ENCODE measurements at regions of chr4 and their contacts with region 1.

Region 1: GRCh38 chr4:74932816-74933561 is at the start of gene PARM1:
- DNase-seq: peak; percentile 78 to 85
- ATAC-seq: peak; percentile 80 to 81
- H3K4me3 ChIP-seq: peak within 1 kb of the TSS; percentile 67 to 83 (median 78)
- H3K27ac ChIP-seq: peak within 1 kb of the TSS; percentile 71 to 83 (median 78)
- H3K4me1 ChIP-seq: no peaks in the 10 kb centered on the region
- H3K27me3 ChIP-seq: no peaks in the 10 kb centered on the region
- CTCF ChIP-seq: peak; percentile 81 to 86 (median 84)
- POLR2A ChIP-seq: peak; percentile 65 to 86
- total RNA-seq, gene PARM1: 9.3 to 13.1 (median 10.3) TPM

Region 2: GRCh38 chr4:74692972-74693371 is 240.0 kb before region 1 on chr4:
- in situ Hi-C with region 1: no loop called
- intact Hi-C with region 1: no loop called
- DNase-seq: no peak
- ATAC-seq: no peak
- H3K4me3 ChIP-seq: no peak overlapping the region
- H3K27ac ChIP-seq: no peak overlapping the region
- H3K4me1 ChIP-seq: no peaks in the 10 kb centered on the region
- H3K27me3 ChIP-seq: no peaks in the 10 kb centered on the region
- CTCF ChIP-seq: no peak
- POLR2A ChIP-seq: no peak

Region 3: GRCh38 chr4:74969507-74970474 is 36.8 kb after region 1 on chr4:
- in situ Hi-C with region 1: no loop called
- intact Hi-C with region 1: loop called (anchors 2 kb)
- DNase-seq: peak; percentile 69 to 82
- ATAC-seq: peak; percentile 92 to 93
- H3K4me3 ChIP-seq: peak overlapping the region; percentile 7 to 29 (median 18)
- H3K27ac ChIP-seq: peak overlapping the region; percentile 82 to 90 (median 86)
- H3K4me1 ChIP-seq: peaks cover 29 to 48% of the 10 kb centered on the region in 2 donors
- H3K27me3 ChIP-seq: no peaks in the 10 kb centered on the region
- CTCF ChIP-seq: peak; percentile 53 to 67 (median 62)
- POLR2A ChIP-seq: peak in 1 of 2 donors; percentile 47

Region 4: DNA sequence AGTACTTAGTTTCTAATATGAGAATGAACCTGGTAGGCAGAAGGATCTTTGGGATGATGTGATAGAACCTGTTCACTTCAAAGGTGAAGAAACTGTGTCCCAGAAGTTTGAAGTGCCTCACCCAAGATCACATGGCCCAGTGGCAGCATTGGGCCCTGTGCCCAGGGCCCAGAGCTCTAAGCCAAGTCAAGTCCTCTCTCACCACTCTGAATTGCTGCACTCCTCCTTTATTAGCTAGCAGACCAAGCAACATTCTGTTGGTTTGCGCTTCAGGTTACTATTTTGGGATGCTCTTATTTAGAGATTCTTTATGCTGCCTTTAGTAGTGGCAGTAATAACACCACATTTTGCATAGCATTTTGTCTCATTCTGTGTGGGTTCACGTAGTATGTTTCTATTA is 82.6 kb after region 1 on chr4:
- in situ Hi-C with region 1: no loop called
- intact Hi-C with region 1: loop called (anchors 5 kb)
- DNase-seq: peak in 1 of 2 donors; percentile 67
- ATAC-seq: peak; percentile 90 to 95
- H3K4me3 ChIP-seq: no peak overlapping the region
- H3K27ac ChIP-seq: peak overlapping the region; percentile 19 to 70 (median 26)
- H3K4me1 ChIP-seq: peaks cover 6 to 19% of the 10 kb centered on the region in 2 donors
- H3K27me3 ChIP-seq: no peaks in the 10 kb centered on the region
- CTCF ChIP-seq: no peak
- POLR2A ChIP-seq: no peak

Region 5: GRCh38 chr4:75087865-75088264 is 154.9 kb after region 1 on chr4:
- in situ Hi-C with region 1: no loop called
- intact Hi-C with region 1: no loop called
- DNase-seq: no peak
- ATAC-seq: no peak
- H3K4me3 ChIP-seq: no peak overlapping the region
- H3K27ac ChIP-seq: no peak overlapping the region
- H3K4me1 ChIP-seq: no peaks in the 10 kb centered on the region
- H3K27me3 ChIP-seq: no peaks in the 10 kb centered on the region
- CTCF ChIP-seq: no peak
- POLR2A ChIP-seq: no peak

Region 6: DNA sequence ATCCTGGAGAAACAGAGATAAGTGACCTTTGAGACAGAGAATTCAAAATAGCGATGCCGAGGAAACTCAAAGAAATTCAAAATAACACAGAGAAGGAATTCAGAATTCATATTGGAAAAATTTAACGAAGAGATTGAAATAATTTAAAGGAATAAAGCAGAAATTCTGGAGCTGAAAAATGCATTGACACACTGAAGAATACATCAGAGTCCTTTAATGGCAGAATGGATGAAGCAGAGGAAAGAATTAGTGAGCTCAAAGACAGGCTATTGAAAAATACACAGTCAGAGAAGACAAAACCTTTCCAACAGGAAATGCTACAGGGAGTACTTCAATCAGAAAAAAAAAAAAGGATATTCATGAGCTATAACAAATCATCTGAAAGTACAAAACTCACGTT is 185.8 kb after region 1 on chr4:
- in situ Hi-C with region 1: loop called (anchors 5 to 25 kb)
- intact Hi-C with region 1: loop called (anchors 1 kb)
- DNase-seq: no peak
- ATAC-seq: no peak
- H3K4me3 ChIP-seq: no peak overlapping the region
- H3K27ac ChIP-seq: no peak overlapping the region
- H3K4me1 ChIP-seq: no peaks in the 10 kb centered on the region
- H3K27me3 ChIP-seq: no peaks in the 10 kb centered on the region
- CTCF ChIP-seq: no peak
- POLR2A ChIP-seq: no peak

Region 7: GRCh38 chr4:75490155-75490554 is 557.2 kb after region 1 on chr4:
- in situ Hi-C with region 1: loop called in 3 of 4 experiments (anchors 25 kb)
- intact Hi-C with region 1: no loop called
- DNase-seq: no peak
- ATAC-seq: no peak
- H3K4me3 ChIP-seq: no peak overlapping the region
- H3K27ac ChIP-seq: no peak overlapping the region
- H3K4me1 ChIP-seq: no peaks in the 10 kb centered on the region
- H3K27me3 ChIP-seq: no peaks in the 10 kb centered on the region
- CTCF ChIP-seq: peak in 1 of 5 experiments; percentile 15
- POLR2A ChIP-seq: no peak